GM10248 (cell line): ENCODE measurements at regions of chr11 and their contacts with region 1.

Region 1: DNA sequence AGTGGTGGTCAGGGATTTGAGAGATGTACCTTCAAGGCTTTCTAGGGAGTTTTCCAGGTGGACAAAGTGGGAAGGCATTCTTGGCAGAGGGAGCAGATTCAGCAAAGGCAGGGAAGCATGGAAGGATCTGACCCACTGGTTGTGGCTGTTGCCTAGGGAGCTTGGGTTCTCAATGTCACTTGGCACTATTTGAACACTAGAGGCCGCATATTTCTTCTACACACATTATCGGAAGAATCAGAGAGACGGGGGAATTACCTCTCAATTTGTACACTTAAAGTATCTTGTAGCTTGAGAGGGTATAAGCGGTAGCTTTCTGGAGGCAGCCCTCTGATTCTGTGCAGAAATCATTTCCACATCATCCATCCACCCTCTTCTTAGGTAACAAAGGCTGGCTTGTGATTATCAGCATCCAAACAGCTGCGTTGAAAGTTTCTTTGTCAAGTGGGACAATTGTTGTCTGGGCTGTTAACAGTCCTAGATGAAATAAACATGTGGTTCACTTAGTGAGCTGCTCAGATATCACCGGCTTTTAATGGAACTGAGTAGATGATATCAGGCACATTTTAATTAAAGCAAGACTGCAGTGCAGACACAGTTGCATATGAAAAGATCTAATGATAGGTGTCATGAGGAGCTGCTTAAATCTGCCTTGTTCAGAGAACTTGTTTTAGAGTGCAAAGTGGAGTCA is 2.6 kb downstream of the NELL1 start:
- DNase-seq: no peak
- CTCF ChIP-seq: peak; percentile 16

Region 2: DNA sequence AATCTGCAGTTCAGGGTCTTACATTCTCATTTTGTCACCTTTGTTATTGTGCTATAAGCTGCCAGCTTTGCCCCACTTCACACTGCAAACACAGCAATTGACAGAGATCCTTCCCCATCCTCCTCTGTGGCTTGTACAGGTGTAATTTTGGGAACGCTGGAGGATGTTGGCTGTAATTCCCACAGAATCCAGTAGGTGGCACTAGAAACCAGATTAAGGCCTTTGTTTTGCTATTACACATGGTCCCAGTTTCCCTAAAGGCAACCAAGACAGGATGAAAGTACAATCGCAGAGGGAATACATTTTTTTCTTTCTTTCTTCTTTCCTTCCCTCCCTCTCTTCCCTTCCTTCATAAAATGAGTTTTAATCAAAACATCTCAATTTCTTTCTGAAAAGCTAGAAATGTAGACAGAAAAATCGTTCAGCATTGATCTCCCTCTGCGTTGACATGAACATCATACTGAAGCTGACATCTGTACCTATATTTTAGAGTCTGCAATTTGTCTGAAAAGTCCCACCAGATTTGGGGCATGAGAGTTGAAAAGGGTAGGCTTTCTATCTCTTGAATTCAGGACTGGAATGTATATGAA is 23.9 kb before region 1 on chr11:
- CTCF ChIA-PET with region 1: interaction called, 28 read pairs
- POLR2A ChIA-PET with region 1: no interaction called
- DNase-seq: peak; percentile 64
- CTCF ChIP-seq: peak; percentile 83

Region 3: DNA sequence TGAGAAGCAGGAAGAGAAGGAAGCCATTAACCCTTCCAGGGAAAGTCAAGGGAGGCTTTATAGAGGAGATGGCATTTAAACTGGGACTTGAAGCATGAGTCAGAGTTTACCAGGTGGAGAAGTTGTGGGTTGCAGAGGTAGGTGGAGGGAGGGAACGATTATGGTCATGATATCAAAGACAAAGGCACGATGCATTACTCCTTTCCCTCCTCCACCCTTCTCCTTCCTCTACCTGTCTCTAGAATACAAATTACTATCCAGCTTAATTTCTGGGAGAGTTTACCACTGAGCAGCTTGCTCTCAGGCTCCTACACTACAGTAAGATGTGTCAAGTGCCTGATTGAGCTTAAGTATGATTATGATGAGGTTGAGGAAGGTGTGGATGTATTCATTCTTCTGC is 149.0 kb after region 1 on chr11:
- CTCF ChIA-PET with region 1: no interaction called
- POLR2A ChIA-PET with region 1: no interaction called
- DNase-seq: no peak
- CTCF ChIP-seq: no peak